Activated CD4-positive, alpha-beta T cell treated with anti-CD3 and anti-CD28 coated beads for 36 hours (primary cell): ENCODE measurements at regions of chr18 and their contacts with region 1.

Region 1: GRCh38 chr18:35756506-35757117 is 175.1 kb downstream of the GALNT1 start:
- DNase-seq: peak; percentile 72
- ATAC-seq: peak; percentile 68
- H3K4me3 Mint-ChIP-seq: no peak overlapping the region
- H3K27ac Mint-ChIP-seq: no peak overlapping the region
- H3K4me1 Mint-ChIP-seq: no peaks in the 10 kb centered on the region
- H3K27me3 Mint-ChIP-seq: peaks cover 8% of the 10 kb centered on the region

Region 2: DNA sequence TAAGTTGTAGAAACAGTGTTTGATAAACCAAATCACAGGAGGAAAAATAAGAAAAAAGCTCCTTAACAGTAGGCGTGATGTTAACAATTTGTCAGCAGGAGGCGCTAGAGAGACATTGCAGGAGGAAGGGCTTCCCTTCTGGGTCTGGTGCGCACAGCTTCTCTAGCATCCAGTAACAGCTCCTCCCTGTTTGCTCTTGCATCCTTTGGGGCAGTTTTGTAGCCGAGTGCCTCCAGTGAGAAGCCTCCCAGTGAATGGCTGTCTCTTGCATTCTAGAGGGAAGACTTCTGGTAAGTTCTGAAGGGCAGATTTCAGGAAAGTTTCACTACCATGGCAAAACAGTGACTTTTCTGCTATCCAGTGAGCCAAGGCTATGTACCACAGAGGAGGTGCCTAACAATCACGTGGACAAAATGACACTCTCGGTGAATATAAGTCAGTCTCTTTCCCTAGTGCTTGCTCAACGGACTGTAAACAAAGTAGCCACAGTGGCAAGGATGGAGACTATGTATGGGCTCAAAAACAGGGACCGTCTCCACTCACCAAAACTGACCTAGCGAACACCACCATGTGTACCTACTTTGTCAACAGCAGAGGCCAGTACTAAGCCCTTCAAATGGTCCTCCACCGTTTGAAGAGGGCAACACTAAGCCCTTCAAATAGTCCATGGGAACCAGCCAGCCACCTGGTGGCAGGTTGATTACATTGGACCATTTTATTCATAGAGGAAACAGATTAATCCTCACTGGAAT is 369.8 kb before region 1 on chr18:
- CTCF ChIA-PET with region 1: interaction called, 9 read pairs
- POLR2A ChIA-PET with region 1: no interaction called
- intact Hi-C with region 1: loop called in 1 of 2 experiments (anchors 5 kb)
- DNase-seq: peak; percentile 79
- ATAC-seq: peak; percentile 98
- H3K4me3 Mint-ChIP-seq: no peak overlapping the region
- H3K27ac Mint-ChIP-seq: no peak overlapping the region
- H3K4me1 Mint-ChIP-seq: peaks cover 2% of the 10 kb centered on the region
- H3K27me3 Mint-ChIP-seq: peaks cover 15% of the 10 kb centered on the region

Region 3: DNA sequence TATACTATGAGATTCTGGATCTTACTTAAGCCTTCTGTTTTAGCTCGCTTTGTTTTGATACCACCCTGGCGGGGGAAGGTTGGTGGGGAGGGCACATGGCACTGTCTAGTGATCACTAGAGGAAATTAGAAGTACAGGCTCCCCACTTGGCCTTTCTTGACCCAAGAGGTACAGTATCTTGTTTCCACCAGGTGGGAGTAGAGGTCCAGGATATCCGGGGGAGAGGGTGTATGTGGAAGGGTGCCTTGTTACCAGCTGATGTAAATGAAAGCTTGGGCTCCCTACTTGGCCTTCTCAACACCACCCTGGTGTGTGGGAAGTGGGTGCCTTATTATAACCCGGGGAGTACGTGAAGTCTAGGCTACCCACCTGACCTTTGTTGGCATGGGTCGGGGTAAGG is 167.6 kb before region 1 on chr18:
- CTCF ChIA-PET with region 1: no interaction called
- POLR2A ChIA-PET with region 1: no interaction called
- intact Hi-C with region 1: loop called in 1 of 2 experiments (anchors 5 kb)
- DNase-seq: peak; percentile 41
- ATAC-seq: peak; percentile 80
- H3K4me3 Mint-ChIP-seq: no peak overlapping the region
- H3K27ac Mint-ChIP-seq: no peak overlapping the region
- H3K4me1 Mint-ChIP-seq: peaks cover 27% of the 10 kb centered on the region
- H3K27me3 Mint-ChIP-seq: no peaks in the 10 kb centered on the region